Heart left ventricle (tissue), 16 donors: ENCODE measurements at regions of chr6 and their contacts with region 1.

Region 1: DNA sequence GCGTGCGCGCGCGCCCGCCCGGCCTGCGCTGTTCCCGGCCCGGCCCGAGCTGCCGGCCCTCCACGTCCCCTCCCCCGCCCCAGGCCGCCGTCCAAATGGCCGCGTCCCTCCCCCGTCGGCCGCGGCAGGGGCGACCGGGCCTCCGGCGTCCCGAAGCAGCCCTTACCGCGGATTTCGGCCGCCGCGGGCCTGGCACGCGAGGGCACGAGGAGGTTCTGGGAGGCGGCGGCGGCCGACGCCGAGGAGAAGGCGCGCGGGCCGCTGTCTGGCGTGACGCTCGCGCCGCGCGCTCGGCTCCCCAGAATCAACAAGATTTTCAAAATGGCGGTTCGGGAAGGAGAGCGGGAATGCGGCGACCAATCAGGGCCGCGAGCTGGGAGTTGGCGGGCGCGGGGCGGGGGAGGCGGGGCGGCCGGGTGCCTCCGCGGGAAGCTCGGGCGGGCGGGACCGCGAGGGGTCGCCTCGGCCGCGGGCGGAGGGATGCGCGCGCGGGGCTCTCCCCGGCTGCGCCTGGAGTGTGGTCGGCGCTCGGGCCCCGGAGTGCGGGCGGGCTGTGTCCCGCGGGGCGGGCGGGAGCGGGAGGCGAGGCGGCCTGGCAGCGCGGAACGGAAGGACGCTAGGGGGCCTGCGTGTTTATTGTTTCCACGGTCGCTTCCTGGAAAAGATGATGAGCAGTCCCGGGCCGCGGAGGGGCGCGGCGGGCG is at the start of gene DEK:
- DNase-seq: peak; percentile 90 to 93 (median 90)
- ATAC-seq: peak; percentile 48 to 92 (median 90)
- H3K4me3 ChIP-seq: peak within 1 kb of the TSS; percentile 43 to 99 (median 92)
- H3K27ac ChIP-seq: peak within 1 kb of the TSS; percentile 90 to 100 (median 96)
- H3K4me1 ChIP-seq: peaks cover 0 to 46% (median 31%) of the 10 kb centered on the region in 12 donors
- H3K27me3 ChIP-seq: no peaks in the 10 kb centered on the region
- CTCF ChIP-seq: peak; percentile 24 to 85 (median 56)
- POLR2A ChIP-seq: peak in 1 of 2 donors; percentile 34
- total RNA-seq, gene DEK: 41.3 to 83.0 (median 64.7) TPM

Region 2: GRCh38 chr6:18047406-18047805 is 217.0 kb before region 1 on chr6:
- intact Hi-C with region 1: no loop called
- DNase-seq: no peak
- ATAC-seq: no peak
- H3K4me3 ChIP-seq: no peak overlapping the region
- H3K27ac ChIP-seq: no peak overlapping the region
- H3K4me1 ChIP-seq: peaks cover 0 to 15% (median 1%) of the 10 kb centered on the region in 12 donors
- H3K27me3 ChIP-seq: no peaks in the 10 kb centered on the region
- CTCF ChIP-seq: no peak
- POLR2A ChIP-seq: no peak

Region 3: DNA sequence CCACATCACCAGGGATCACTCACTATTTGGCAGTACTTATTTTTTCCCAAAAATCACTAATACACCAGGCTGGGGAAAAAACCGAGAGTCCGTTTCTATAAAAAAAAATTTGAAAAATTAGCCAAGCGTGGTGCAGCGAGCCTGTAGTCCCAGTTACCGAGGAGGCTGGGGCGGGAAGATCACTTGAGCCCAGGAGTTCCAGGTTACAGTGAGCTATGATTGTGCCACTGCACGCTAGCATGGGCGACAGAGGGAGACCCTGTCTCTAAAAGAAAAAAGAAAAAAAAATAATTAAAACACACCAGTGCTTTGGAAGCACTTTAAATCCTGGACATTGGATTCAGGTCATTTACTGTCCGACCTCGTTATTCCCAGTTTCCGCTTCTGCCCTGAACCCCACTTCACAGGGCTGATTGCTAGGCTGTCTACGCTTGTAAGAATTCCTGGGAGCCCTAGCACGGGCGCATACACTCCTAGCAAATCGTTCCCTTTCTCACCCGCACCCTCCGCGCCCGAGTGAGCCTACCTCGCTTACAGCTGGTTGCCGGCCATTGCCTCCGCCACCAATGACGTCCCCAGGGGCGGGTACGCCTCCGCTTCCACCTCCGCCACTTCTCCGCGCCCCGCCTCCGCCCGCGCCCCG is 109.7 kb before region 1 on chr6 and contains the start of gene TPMT:
- intact Hi-C with region 1: loop called in 2 of 10 experiments (anchors 5 kb)
- DNase-seq: peak in 3 of 5 donors; percentile 21 to 33 (median 30)
- ATAC-seq: peak in 3 of 4 donors; percentile 9 to 18 (median 12)
- H3K4me3 ChIP-seq: peak within 1 kb of the TSS; percentile 84 to 99 (median 92)
- H3K27ac ChIP-seq: peak within 1 kb of the TSS; percentile 65 to 93 (median 90)
- H3K4me1 ChIP-seq: peaks cover 0 to 33% (median 14%) of the 10 kb centered on the region in 12 donors
- H3K27me3 ChIP-seq: no peaks in the 10 kb centered on the region
- CTCF ChIP-seq: no peak
- POLR2A ChIP-seq: no peak
- total RNA-seq, gene TPMT: 7.1 to 15.0 (median 13.7) TPM

Region 4: GRCh38 chr6:18317850-18318249 is 53.5 kb after region 1 on chr6:
- intact Hi-C with region 1: no loop called
- DNase-seq: no peak
- ATAC-seq: no peak
- H3K4me3 ChIP-seq: no peak overlapping the region
- H3K27ac ChIP-seq: no peak overlapping the region
- H3K4me1 ChIP-seq: no peaks in the 10 kb centered on the region
- H3K27me3 ChIP-seq: no peaks in the 10 kb centered on the region
- CTCF ChIP-seq: no peak
- POLR2A ChIP-seq: no peak